GM12878 (cell line): ENCODE measurements at regions of chr6 and their contacts with region 1.

Region 1: GRCh38 chr6:44265007-44265721 is at the start of gene NFKBIE:
- DNase-seq: no peak
- ATAC-seq: peak; percentile 48
- H3K4me3 ChIP-seq: peak within 1 kb of the TSS; percentile 98
- H3K27ac ChIP-seq: peak within 1 kb of the TSS; percentile 99
- H3K4me1 ChIP-seq: peaks cover 48% of the 10 kb centered on the region
- H3K27me3 ChIP-seq: peaks cover 0 to 2% of the 10 kb centered on the region in 2 experiments; a peak in 1 of 4 replicates
- CTCF ChIP-seq: peak; percentile 45 to 60 (median 46); a peak in 4 of 6 replicates
- EP300 ChIP-seq: no peak
- POLR2A ChIP-seq: no peak
- RAD21 ChIP-seq: peak; percentile 64
- polyA plus RNA-seq, gene NFKBIE: 10.4 to 26.0 TPM

Region 2: DNA sequence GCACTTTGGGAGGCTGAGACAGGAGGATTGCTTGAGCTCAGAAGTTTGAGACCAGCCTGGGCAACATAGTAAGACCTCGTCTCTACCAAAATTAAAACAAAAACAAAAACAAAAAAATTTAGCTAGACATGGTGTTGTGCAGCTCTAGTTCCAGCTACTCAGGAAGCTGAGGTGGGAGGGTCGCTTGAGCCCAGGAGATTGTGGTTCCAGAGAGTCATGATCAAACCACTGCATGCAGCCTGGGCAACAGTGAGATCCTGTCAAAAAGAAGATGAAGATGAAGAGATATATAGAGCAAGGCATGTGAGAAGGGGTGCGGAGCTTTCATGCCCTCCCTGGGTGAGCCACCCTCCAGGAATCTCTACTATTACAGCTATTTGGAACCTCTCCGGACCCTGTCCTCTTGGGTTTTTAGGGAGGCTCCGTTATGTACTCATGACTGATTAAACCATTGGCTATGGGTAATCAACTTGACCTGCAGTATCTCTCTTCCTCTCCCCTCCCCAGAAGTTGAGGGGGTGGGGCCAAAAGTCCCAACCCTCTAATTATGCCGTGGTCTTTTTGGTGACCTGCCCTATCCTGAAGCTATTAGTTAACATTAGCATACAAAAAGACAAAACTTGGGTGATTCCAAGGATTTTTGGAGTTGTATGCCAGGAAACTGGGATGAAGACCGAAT is 680.1 kb before region 1 on chr6:
- CTCF ChIA-PET with region 1: no interaction called
- POLR2A ChIA-PET with region 1: no interaction called
- RAD21 ChIA-PET with region 1: no interaction called
- SMC1A ChIA-PET with region 1: no interaction called
- in situ Hi-C with region 1: no loop called
- intact Hi-C with region 1: no loop called
- DNase-seq: no peak
- ATAC-seq: no peak
- H3K4me3 ChIP-seq: no peak overlapping the region
- H3K27ac ChIP-seq: no peak overlapping the region
- H3K4me1 ChIP-seq: no peaks in the 10 kb centered on the region
- H3K27me3 ChIP-seq: no peaks in the 10 kb centered on the region
- CTCF ChIP-seq: no peak
- EP300 ChIP-seq: no peak
- POLR2A ChIP-seq: no peak
- RAD21 ChIP-seq: no peak

Region 3: DNA sequence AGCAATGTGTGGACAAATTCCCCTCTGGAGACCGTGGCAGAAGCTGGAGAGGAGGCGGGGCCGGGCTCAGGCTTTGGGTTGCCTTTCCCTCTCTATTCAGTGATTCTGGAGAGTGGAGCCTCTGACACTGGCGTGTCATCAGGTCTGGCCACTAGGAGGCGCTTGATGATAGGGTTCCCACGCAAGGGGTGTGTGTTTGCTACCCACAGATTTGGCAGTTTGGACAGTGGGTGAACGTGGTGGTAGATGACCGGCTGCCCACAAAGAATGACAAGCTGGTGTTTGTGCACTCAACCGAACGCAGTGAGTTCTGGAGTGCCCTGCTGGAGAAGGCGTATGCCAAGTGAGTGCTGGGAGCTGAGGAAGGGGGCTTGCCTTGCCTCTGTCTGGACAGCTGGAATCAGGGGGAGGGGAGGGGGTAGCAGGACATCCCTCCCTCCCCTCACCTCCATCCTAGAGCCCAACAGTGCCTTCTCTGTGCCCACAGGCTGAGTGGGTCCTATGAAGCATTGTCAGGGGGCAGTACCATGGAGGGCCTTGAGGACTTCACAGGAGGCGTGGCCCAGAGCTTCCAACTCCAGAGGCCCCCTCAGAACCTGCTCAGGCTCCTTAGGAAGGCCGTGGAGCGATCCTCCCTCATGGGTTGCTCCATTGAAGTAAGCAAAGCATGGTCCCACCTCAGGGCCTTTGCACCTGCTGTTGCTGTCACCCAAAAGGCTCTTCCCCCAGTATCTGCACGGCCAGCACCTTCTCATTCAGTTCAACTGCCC is 92.2 kb before region 1 on chr6:
- CTCF ChIA-PET with region 1: interaction called, 22 read pairs
- POLR2A ChIA-PET with region 1: interaction called, 3 read pairs
- RAD21 ChIA-PET with region 1: interaction called, 20 read pairs
- SMC1A ChIA-PET with region 1: interaction called, 11 read pairs
- in situ Hi-C with region 1: no loop called
- intact Hi-C with region 1: no loop called
- DNase-seq: peak; percentile 30
- ATAC-seq: peak; percentile 89
- H3K4me3 ChIP-seq: no peak overlapping the region
- H3K27ac ChIP-seq: no peak overlapping the region
- H3K4me1 ChIP-seq: peaks cover 16% of the 10 kb centered on the region
- H3K27me3 ChIP-seq: no peaks in the 10 kb centered on the region; a peak in 2 of 4 replicates
- CTCF ChIP-seq: peak; percentile 92 to 98 (median 98); a peak in 5 of 6 replicates
- EP300 ChIP-seq: no peak
- POLR2A ChIP-seq: no peak
- RAD21 ChIP-seq: peak; percentile 98

Region 4: DNA sequence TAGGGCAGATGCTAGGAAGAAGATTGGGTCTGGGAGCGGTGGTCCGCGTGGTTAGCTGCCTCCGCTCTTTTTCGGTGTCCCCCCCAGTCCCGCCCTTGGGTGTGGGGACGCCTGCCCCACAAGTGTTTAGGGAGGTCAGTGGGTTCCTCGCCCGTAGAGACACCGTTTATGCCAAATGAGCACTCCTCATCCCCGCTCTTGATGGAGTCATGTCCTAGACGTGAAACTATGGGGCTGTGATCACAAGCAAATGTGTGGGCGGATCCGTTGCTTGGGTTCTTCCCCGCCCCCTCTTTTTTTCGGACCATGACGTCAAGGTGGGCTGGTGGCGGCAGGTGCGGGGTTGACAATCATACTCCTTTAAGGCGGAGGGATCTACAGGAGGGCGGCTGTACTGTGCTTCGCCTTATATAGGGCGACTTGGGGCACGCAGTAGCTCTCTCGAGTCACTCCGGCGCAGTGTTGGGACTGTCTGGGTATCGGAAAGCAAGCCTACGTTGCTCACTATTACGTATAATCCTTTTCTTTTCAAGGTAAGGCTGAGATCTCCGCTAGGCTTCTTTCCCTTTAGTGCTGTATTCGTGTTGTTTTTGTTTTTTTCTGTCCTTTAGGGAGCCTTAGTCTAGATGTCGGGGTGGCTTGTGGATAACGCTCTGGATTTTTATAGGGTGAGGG is 18.4 kb before region 1 on chr6 and contains the start of gene HSP90AB1:
- CTCF ChIA-PET with region 1: interaction called, 24 read pairs
- POLR2A ChIA-PET with region 1: interaction called, 131 read pairs
- RAD21 ChIA-PET with region 1: interaction called, 12 read pairs
- SMC1A ChIA-PET with region 1: interaction called, 18 read pairs
- in situ Hi-C with region 1: no loop called
- intact Hi-C with region 1: no loop called
- DNase-seq: peak; percentile 96
- ATAC-seq: peak; percentile 84
- H3K4me3 ChIP-seq: peak within 1 kb of the TSS; percentile 95
- H3K27ac ChIP-seq: peak within 1 kb of the TSS; percentile 96
- H3K4me1 ChIP-seq: peaks cover 7% of the 10 kb centered on the region; the same call in 1 of the 2 replicates
- H3K27me3 ChIP-seq: no peaks in the 10 kb centered on the region
- CTCF ChIP-seq: no peak
- EP300 ChIP-seq: peak; percentile 24 to 57; a peak in 1 of 4 replicates
- POLR2A ChIP-seq: peak; percentile 99
- RAD21 ChIP-seq: no peak
- polyA plus RNA-seq, gene HSP90AB1: 1,089 to 1,682 TPM

Region 5: DNA sequence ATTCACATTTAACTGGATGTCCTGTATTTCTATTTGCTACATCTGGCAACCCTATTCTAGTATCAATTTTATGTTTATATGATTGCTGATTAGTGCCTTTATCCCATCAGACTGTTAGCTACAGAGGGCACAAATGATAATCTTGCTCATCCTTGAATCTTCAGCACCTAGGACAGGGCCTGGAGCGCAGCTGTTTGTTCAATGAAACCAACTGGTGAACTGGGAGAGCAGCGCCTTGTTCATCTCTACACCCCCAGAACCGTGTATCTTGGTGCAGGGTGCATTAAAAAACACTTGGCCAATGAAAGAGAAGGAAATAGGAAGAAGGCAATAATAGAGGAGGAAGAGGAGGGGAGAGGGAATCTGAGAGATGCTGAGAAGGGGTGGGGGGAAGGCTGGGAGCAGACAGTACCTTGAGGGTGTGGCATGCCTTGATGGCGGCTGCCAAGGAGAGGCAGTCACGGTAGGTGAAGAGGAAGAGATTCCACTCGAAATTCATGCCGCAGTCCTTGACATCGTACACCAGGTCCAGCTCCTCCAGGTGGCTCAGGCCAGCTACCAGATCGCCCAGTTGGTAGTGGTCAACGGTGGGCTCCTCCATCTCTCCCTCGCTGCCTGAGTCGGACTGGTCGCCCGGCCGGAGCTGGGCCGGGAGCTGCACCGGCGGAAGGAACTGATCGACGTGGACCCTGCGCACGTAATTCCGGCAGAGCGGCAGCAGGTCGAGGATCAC is 20.6 kb after region 1 on chr6:
- CTCF ChIA-PET with region 1: interaction called, 22 read pairs
- POLR2A ChIA-PET with region 1: no interaction called
- RAD21 ChIA-PET with region 1: no interaction called
- SMC1A ChIA-PET with region 1: no interaction called
- in situ Hi-C with region 1: no loop called
- intact Hi-C with region 1: no loop called
- DNase-seq: no peak
- ATAC-seq: no peak
- H3K4me3 ChIP-seq: no peak overlapping the region
- H3K27ac ChIP-seq: no peak overlapping the region
- H3K4me1 ChIP-seq: no peaks in the 10 kb centered on the region
- H3K27me3 ChIP-seq: peaks cover 0 to 3% of the 10 kb centered on the region in 2 experiments; a peak in 2 of 4 replicates
- CTCF ChIP-seq: no peak
- EP300 ChIP-seq: no peak
- POLR2A ChIP-seq: no peak
- RAD21 ChIP-seq: no peak

Region 6: DNA sequence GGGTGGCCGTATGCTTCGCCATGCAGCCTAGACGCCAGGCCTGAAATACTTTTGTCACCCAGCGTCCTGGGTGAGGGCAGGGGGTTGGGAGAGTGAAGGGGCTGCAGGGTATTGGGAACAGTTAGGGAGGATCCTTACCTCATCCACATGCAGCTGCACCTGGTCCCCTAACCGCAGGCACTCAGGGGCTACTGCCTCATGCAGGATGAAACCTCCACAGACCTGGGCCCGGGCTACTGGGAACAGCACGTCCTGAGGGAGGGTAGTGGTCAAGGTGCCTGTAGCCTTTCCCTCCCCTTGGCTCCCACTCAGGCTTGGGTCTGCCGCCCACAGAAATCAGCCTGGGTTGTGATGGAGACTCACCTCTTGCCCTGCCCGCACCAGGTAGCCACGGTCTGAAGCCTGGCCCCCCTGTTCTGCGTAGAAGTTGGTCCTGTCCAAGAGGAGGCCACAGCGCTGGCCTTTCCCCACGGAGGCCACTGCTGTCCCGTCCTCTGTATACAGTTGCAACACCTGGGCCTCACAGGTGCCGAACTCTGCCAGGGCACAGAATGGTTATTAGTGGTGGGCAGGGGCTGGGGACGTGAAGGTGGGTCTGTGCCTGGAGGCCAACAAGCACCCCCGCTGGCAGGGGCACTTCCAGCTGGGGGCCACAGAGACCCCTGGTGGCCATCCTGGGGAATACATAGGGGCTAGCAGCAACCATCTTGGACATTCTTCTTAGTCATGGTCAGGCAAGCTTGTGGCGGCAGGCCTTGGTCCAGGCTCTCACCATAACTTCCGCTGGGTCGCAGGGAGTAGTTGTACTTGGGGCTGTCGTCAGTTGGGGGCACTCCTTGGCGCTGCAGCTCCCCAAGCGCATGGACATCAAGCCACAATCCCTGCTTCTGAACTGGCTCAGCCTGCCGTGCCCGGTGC is 39.4 kb after region 1 on chr6:
- CTCF ChIA-PET with region 1: interaction called, 87 read pairs
- POLR2A ChIA-PET with region 1: interaction called, 3 read pairs
- RAD21 ChIA-PET with region 1: interaction called, 22 read pairs
- SMC1A ChIA-PET with region 1: interaction called, 22 read pairs
- in situ Hi-C with region 1: no loop called
- intact Hi-C with region 1: loop called (anchors 2 kb)
- DNase-seq: no peak
- ATAC-seq: peak; percentile 86
- H3K4me3 ChIP-seq: no peak overlapping the region
- H3K27ac ChIP-seq: no peak overlapping the region
- H3K4me1 ChIP-seq: no peaks in the 10 kb centered on the region
- H3K27me3 ChIP-seq: no peaks in the 10 kb centered on the region
- CTCF ChIP-seq: peak; percentile 74 to 88 (median 75)
- EP300 ChIP-seq: no peak
- POLR2A ChIP-seq: 0 out of 2 replicates have a peak, but pooled peaks have one; percentile 36
- RAD21 ChIP-seq: peak; percentile 51

Region 7: GRCh38 chr6:44338228-44339122 is 73.3 kb after region 1 on chr6:
- CTCF ChIA-PET with region 1: interaction called, 163 read pairs
- POLR2A ChIA-PET with region 1: interaction called, 3 read pairs
- RAD21 ChIA-PET with region 1: interaction called, 36 read pairs
- SMC1A ChIA-PET with region 1: interaction called, 79 read pairs
- in situ Hi-C with region 1: loop called (anchors 5 kb)
- intact Hi-C with region 1: loop called (anchors 1 kb)
- DNase-seq: peak; percentile 34
- ATAC-seq: peak; percentile 96
- H3K4me3 ChIP-seq: no peak overlapping the region
- H3K27ac ChIP-seq: no peak overlapping the region
- H3K4me1 ChIP-seq: no peaks in the 10 kb centered on the region
- H3K27me3 ChIP-seq: peaks cover 2 to 4% of the 10 kb centered on the region in 2 experiments; a peak in 3 of 4 replicates
- CTCF ChIP-seq: peak; percentile 71 to 92 (median 82); a peak in 5 of 6 replicates
- EP300 ChIP-seq: no peak
- POLR2A ChIP-seq: no peak
- RAD21 ChIP-seq: peak; percentile 96

Region 8: GRCh38 chr6:44353336-44353735 is 88.2 kb after region 1 on chr6:
- CTCF ChIA-PET with region 1: no interaction called
- POLR2A ChIA-PET with region 1: no interaction called
- RAD21 ChIA-PET with region 1: no interaction called
- SMC1A ChIA-PET with region 1: no interaction called
- in situ Hi-C with region 1: no loop called
- intact Hi-C with region 1: no loop called
- DNase-seq: no peak
- ATAC-seq: no peak
- H3K4me3 ChIP-seq: no peak overlapping the region
- H3K27ac ChIP-seq: no peak overlapping the region
- H3K4me1 ChIP-seq: no peaks in the 10 kb centered on the region
- H3K27me3 ChIP-seq: no peaks in the 10 kb centered on the region; a peak in 1 of 4 replicates
- CTCF ChIP-seq: no peak
- EP300 ChIP-seq: no peak
- POLR2A ChIP-seq: no peak
- RAD21 ChIP-seq: no peak

Region 9: DNA sequence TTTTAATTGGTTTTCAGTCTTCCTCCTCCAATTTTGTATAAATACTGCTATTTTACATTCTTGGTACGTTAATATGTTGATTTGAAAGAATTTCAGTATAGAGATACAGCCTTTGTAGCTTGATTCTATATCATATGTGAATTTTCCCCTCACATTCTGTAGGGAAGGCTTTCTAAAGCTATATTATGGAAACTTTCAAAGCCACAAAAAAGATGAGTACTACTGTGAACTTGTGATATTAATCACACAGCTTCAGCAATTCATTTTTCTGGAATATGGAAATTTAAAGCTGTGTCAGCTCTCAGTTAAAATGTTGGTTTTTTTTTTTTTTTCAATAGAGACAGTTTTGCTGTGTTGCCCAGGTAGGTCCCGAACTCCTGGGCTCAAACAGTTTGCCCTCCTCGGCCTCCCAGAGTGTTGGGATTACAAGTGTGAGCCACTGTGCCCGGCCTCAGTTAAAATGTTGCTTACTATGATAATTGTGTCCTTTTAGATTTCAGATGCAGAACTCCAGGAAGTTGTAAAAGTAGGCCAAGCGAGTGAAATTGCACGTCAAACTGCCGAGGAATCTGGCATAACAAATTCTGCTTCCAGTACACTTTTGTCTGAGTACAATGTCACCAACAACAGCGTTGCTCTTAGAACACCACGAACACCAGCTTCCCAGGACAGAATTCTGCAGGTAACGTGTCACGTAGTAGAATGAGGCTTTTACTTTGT is 142.9 kb after region 1 on chr6:
- CTCF ChIA-PET with region 1: no interaction called
- POLR2A ChIA-PET with region 1: no interaction called
- RAD21 ChIA-PET with region 1: no interaction called
- SMC1A ChIA-PET with region 1: no interaction called
- in situ Hi-C with region 1: no loop called
- intact Hi-C with region 1: no loop called
- DNase-seq: no peak
- ATAC-seq: no peak
- H3K4me3 ChIP-seq: no peak overlapping the region
- H3K27ac ChIP-seq: no peak overlapping the region
- H3K4me1 ChIP-seq: no peaks in the 10 kb centered on the region
- H3K27me3 ChIP-seq: no peaks in the 10 kb centered on the region
- CTCF ChIP-seq: no peak
- EP300 ChIP-seq: no peak
- POLR2A ChIP-seq: no peak
- RAD21 ChIP-seq: no peak